ENCODE measurements at regions of chr17 and their contacts with region 1.

Region 1: GRCh38 chr17:49556223-49556971 is 19.3 kb upstream of the NXPH3 start:
- DNase-seq: peak; percentile 82 to 94
- ATAC-seq: peak; percentile 89 to 98
- H3K4me3 ChIP-seq: no peak overlapping the region
- H3K27ac ChIP-seq: peak overlapping the region; percentile 46 to 64
- H3K4me1 ChIP-seq: 0 out of 3 replicates have a peak, but pooled peaks cover 3% of the 10 kb centered on the region
- CTCF ChIP-seq: peak; percentile 99
- EP300 ChIP-seq: no peak
- POLR2A ChIP-seq: no peak; the same call in 1 of the 2 replicates
- RAD21 ChIP-seq: peak; percentile 97 to 98

Region 2: DNA sequence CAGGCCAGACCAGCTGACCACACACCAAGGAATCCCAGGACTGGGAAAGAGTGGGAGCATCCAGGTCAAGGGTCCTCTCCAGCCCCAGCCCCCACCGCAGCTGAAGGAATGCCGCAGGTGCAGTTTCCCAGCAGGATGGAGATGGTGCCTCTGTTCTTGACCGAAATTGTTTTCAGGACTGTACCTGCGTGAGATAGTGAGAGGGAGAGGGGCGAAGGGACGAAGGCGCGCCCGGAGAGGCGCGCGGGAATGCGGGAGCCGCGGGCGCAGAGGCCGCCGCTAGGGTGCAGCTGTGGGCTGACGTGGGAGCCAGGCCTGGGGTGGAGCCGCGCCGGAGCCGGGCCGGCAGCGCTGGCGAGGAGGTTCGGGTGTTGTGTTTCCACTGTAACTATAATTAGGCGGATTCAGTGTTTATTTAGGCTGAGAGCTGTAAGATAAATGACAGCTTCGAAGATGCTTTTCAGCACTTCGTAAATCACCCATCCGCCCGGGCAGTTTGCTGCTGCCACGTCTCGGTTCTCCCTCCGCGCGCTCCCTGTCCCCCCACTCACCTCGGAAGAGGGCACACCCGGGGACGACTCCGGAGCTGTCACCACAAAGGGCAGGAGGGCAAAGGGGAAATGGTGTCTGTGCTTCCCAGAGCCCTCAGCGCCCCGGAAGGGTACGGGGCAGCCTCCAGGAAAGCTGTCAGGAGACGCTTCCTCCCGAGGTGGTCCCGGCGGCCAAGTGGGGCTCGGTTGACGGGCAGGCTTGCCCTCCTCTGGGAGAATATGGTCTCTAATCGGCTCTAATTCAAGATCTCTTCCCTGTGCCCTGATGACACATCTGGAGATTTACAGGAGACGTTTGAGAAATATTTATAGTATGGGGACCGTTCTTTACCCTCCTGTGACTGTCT is 1063.7 kb before region 1 on chr17:
- CTCF ChIA-PET with region 1: no interaction called
- POLR2A ChIA-PET with region 1: no interaction called
- DNase-seq: peak; percentile 66 to 85
- ATAC-seq: peak; percentile 96 to 98
- H3K4me3 ChIP-seq: peak overlapping the region; percentile 25
- H3K27ac ChIP-seq: peak overlapping the region; percentile 43 to 72
- H3K4me1 ChIP-seq: peaks cover 14% of the 10 kb centered on the region; the same call in 2 of the 3 replicates
- CTCF ChIP-seq: peak; percentile 92
- EP300 ChIP-seq: no peak
- POLR2A ChIP-seq: no peak
- RAD21 ChIP-seq: peak; percentile 83 to 96

Region 3: GRCh38 chr17:49315551-49316257 is 240.7 kb before region 1 on chr17:
- CTCF ChIA-PET with region 1: interaction called, 80 read pairs
- POLR2A ChIA-PET with region 1: no interaction called
- DNase-seq: peak; percentile 91 to 97
- ATAC-seq: peak; percentile 99
- H3K4me3 ChIP-seq: no peak overlapping the region; the same call in 2 of the 3 replicates
- H3K27ac ChIP-seq: peak overlapping the region; percentile 8 to 56; a peak in 4 of 6 replicates
- H3K4me1 ChIP-seq: peaks cover 13% of the 10 kb centered on the region
- CTCF ChIP-seq: peak; percentile 99
- EP300 ChIP-seq: no peak
- POLR2A ChIP-seq: no peak
- RAD21 ChIP-seq: peak; percentile 99 to 100

Region 4: GRCh38 chr17:49390548-49391324 is 165.7 kb before region 1 on chr17:
- CTCF ChIA-PET with region 1: interaction called, 563 read pairs
- POLR2A ChIA-PET with region 1: no interaction called
- DNase-seq: no peak
- ATAC-seq: no peak
- H3K4me3 ChIP-seq: no peak overlapping the region
- H3K27ac ChIP-seq: peak overlapping the region; percentile 11 to 29; a peak in 1 of 6 replicates
- H3K4me1 ChIP-seq: peaks cover 10% of the 10 kb centered on the region; the same call in 1 of the 3 replicates
- CTCF ChIP-seq: no peak
- EP300 ChIP-seq: no peak
- POLR2A ChIP-seq: no peak
- RAD21 ChIP-seq: no peak

Region 5: GRCh38 chr17:49471089-49471683 is 85.2 kb before region 1 on chr17:
- CTCF ChIA-PET with region 1: interaction called, 121 read pairs
- POLR2A ChIA-PET with region 1: interaction called, 3 read pairs
- DNase-seq: no peak
- ATAC-seq: peak in 1 of 2 experiments; percentile 32; a peak in 3 of 6 replicates
- H3K4me3 ChIP-seq: no peak overlapping the region
- H3K27ac ChIP-seq: no peak overlapping the region
- H3K4me1 ChIP-seq: no peaks in the 10 kb centered on the region
- CTCF ChIP-seq: no peak
- EP300 ChIP-seq: no peak
- POLR2A ChIP-seq: no peak
- RAD21 ChIP-seq: no peak

Region 6: DNA sequence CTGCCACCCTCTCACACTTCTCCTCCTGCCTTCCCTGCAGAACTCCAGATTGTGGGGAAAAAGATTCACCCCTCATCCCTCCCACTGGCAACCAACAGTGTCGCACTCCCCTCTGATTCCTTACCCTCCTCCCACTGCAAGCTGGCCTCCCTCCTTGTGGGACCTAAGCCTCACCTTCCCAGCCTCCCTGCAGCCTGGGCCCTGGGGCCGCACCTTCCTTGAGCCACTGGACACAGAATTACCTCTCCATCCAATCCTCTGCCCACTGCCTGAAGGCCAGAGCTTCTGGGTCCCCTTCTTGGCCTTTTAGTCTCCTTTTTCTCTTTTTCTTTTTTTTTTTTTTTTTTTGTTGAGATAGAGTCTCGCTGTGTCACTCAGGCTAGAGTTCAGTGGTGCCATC is 27.4 kb before region 1 on chr17:
- CTCF ChIA-PET with region 1: interaction called, 164 read pairs
- POLR2A ChIA-PET with region 1: no interaction called
- DNase-seq: no peak
- ATAC-seq: no peak
- H3K4me3 ChIP-seq: no peak overlapping the region
- H3K27ac ChIP-seq: no peak overlapping the region
- H3K4me1 ChIP-seq: no peaks in the 10 kb centered on the region
- CTCF ChIP-seq: no peak
- EP300 ChIP-seq: no peak
- POLR2A ChIP-seq: no peak
- RAD21 ChIP-seq: no peak

Region 7: DNA sequence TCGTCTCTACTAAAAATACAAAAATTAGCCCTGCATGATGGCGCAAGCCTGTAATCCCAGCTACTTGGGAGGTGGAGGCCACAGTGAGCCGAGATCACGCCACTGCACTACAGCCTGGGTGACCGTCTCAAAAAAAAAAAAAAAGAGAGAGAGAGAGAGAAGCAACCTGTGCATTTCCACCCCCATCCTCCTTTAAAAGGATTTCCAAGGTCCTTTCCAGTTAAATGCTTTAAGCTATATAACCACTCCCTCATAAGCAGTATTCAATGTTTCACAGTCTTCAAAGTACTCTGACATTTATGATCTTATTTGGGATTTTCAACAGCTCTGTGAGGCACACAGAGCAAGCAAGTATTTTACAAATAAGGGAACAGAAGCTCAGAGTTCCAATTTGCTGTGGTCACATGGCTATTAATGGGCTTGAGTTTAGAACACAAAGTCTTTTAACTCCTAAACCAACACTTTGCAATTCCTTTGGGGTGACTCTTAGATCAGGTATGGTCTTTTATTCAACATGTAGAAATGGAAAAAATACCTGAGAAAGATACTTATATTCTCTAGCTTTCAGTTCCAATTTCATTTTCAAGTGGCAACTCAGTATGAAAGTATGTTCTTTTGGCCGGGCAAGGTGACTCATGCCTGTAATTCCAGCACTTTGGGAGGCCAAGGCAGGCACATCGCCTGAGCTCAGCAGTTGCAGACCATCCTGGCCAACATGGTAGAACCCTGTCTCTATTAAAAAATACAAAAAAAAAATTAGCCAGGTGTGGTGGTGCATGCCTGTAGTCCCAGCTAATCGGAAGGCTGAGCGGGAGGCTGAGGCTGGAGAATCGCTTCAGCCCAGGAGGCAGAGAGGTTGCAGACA is 90.2 kb after region 1 on chr17:
- CTCF ChIA-PET with region 1: interaction called, 14 read pairs
- POLR2A ChIA-PET with region 1: no interaction called
- DNase-seq: peak in 1 of 2 experiments; percentile 27
- ATAC-seq: peak; percentile 80 to 92
- H3K4me3 ChIP-seq: no peak overlapping the region
- H3K27ac ChIP-seq: peak overlapping the region; percentile 32 to 53; a peak in 4 of 6 replicates
- H3K4me1 ChIP-seq: peaks cover 24% of the 10 kb centered on the region
- CTCF ChIP-seq: no peak
- EP300 ChIP-seq: no peak
- POLR2A ChIP-seq: no peak
- RAD21 ChIP-seq: no peak

Region 8: DNA sequence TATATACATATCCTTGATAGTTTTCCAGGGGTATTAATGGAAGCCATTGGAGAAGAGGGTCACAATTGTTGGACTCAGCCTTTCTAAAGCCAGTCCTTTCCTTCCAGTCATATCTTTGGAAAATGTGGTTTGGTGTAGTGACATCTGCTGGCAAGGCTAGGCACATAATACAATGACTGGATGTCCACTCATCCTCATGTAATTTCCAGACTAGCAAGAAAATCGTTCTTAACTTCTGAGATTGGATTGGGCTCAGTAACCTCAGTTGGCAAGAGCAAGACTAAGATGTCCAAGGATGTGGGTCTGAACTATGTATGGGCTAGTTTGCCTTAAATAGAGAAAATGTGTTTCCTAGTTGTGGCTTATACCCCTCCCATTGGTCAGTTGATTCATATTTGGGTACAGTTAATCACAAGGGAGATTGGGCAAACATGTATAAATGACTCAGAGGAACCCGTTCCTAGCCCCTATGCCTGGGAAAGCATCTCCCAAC is 223.4 kb after region 1 on chr17:
- CTCF ChIA-PET with region 1: interaction called, 30 read pairs
- POLR2A ChIA-PET with region 1: no interaction called
- DNase-seq: peak; percentile 34 to 60
- ATAC-seq: peak; percentile 84 to 86
- H3K4me3 ChIP-seq: no peak overlapping the region
- H3K27ac ChIP-seq: no peak overlapping the region
- H3K4me1 ChIP-seq: no peaks in the 10 kb centered on the region
- CTCF ChIP-seq: peak; percentile 54
- EP300 ChIP-seq: no peak
- POLR2A ChIP-seq: no peak
- RAD21 ChIP-seq: peak; percentile 37 to 54; a peak in 4 of 5 replicates

Region 9: DNA sequence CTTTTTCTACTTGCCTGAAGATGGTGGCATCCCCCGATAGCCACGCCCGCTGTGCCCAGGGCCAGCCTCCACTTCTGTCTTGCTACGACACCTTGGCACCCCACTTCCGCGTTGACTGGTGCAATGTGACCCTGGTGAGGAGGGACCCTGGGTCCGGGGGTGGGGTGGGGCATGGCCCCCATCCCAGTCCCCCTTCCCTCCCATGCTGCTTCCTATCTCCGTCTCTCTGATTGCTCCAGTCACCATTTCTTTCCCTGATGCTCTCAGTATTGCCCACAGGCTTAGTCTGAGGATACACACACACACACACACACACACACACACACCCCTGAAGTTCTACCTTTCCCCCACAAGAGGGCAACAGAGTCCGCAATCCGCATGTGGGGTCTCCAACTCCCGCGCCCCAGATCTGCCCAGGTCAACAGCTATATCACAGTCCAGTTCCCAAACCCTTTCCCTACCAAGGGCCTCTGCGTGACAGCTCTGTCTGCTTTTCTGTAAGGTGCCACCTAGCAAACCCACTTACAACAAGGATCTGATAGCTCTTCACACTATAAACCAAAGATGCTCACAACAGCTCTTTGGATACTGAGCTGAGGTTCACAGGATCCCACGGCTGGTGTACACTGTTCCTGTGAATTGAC is 612.8 kb after region 1 on chr17:
- CTCF ChIA-PET with region 1: no interaction called
- POLR2A ChIA-PET with region 1: no interaction called
- DNase-seq: peak; percentile 59 to 85
- ATAC-seq: peak; percentile 49 to 77
- H3K4me3 ChIP-seq: no peak overlapping the region
- H3K27ac ChIP-seq: peak overlapping the region; percentile 41 to 55; a peak in 5 of 6 replicates
- H3K4me1 ChIP-seq: peaks cover 25% of the 10 kb centered on the region
- CTCF ChIP-seq: peak; percentile 97
- EP300 ChIP-seq: no peak
- POLR2A ChIP-seq: no peak
- RAD21 ChIP-seq: peak; percentile 98 to 99

Measured in A549 (cell line).